A673 (cell line): ENCODE measurements at regions of chr6 and their contacts with region 1.

Region 1: DNA sequence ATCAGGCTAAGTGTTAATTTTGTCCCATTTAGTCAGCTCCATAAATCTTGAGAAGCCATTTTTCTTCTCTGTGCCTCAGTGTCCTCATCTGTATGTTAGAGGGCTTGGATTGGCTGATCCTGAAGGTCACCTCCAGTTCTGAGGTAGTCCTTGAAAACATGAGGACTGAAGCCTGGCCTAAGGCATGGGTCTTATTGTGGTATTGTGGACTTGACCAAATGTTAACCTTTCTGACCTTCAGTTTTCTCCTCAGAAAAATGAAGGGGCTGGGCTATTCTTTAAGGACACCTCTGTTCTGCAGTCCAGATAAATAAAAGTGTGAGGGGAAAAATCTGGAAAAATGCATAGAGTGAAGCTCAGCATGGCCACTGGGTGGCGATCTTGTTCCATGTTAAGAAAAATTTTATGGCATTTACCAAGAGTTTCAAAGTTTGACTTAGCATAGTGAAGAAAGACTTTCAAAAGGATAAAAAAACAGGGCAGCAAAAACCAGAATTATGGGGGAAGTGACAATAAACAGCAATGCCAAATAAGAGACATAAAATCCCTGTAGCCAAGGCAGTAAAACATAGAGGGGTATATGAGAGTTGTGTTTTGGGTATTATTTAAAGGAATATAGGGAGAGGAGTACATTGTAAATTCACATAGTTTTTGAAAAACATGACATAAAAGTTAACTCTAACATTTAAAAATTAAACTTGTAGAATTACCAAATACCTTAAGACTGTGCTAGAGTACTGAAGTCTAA is 13.2 kb upstream of the TFB1M start:
- DNase-seq: peak; percentile 81
- H3K4me3 ChIP-seq: no peak overlapping the region
- H3K27ac ChIP-seq: no peak overlapping the region
- H3K4me1 ChIP-seq: peaks cover 5% of the 10 kb centered on the region
- H3K27me3 ChIP-seq: no peaks in the 10 kb centered on the region
- CTCF ChIP-seq: peak; percentile 86

Region 2: GRCh38 chr6:155530219-155530834 is 202.8 kb after region 1 on chr6:
- CTCF ChIA-PET with region 1: interaction called, 7 read pairs
- POLR2A ChIA-PET with region 1: no interaction called
- intact Hi-C with region 1: loop called (anchors 1 kb)
- DNase-seq: peak; percentile 72
- H3K4me3 ChIP-seq: no peak overlapping the region
- H3K27ac ChIP-seq: no peak overlapping the region
- H3K4me1 ChIP-seq: peaks cover 20% of the 10 kb centered on the region
- H3K27me3 ChIP-seq: no peaks in the 10 kb centered on the region
- CTCF ChIP-seq: peak; percentile 83

Region 3: GRCh38 chr6:156557251-156557910 is 1229.9 kb after region 1 on chr6:
- CTCF ChIA-PET with region 1: no interaction called
- POLR2A ChIA-PET with region 1: no interaction called
- intact Hi-C with region 1: loop called (anchors 10 kb)
- DNase-seq: peak; percentile 45
- H3K4me3 ChIP-seq: no peak overlapping the region
- H3K27ac ChIP-seq: no peak overlapping the region
- H3K4me1 ChIP-seq: no peaks in the 10 kb centered on the region
- H3K27me3 ChIP-seq: no peaks in the 10 kb centered on the region
- CTCF ChIP-seq: no peak

Region 4: GRCh38 chr6:156674197-156674596 is 1346.7 kb after region 1 on chr6:
- CTCF ChIA-PET with region 1: no interaction called
- POLR2A ChIA-PET with region 1: no interaction called
- intact Hi-C with region 1: no loop called
- DNase-seq: no peak
- H3K4me3 ChIP-seq: no peak overlapping the region
- H3K27ac ChIP-seq: no peak overlapping the region
- H3K4me1 ChIP-seq: no peaks in the 10 kb centered on the region
- H3K27me3 ChIP-seq: no peaks in the 10 kb centered on the region
- CTCF ChIP-seq: no peak

Region 5: GRCh38 chr6:156776840-156777576 is 1449.5 kb after region 1 on chr6 and contains the start of gene ARID1B:
- CTCF ChIA-PET with region 1: no interaction called
- POLR2A ChIA-PET with region 1: no interaction called
- intact Hi-C with region 1: loop called (anchors 5 kb)
- DNase-seq: peak; percentile 88
- H3K4me3 ChIP-seq: peak within 1 kb of the TSS; percentile 73
- H3K27ac ChIP-seq: peak within 1 kb of the TSS; percentile 96
- H3K4me1 ChIP-seq: peaks cover 43% of the 10 kb centered on the region
- H3K27me3 ChIP-seq: no peaks in the 10 kb centered on the region
- CTCF ChIP-seq: no peak
- total RNA-seq, gene ARID1B: 78.5 and 86.3 TPM in 2 replicates